Activated naive CD4-positive, alpha-beta T cell treated with anti-CD3 and anti-CD28 coated beads for 36 hours (primary cell): ENCODE measurements at regions of chr15 and their contacts with region 1.

Region 1: GRCh38 chr15:59997070-59997701 is 6.9 kb upstream of the FOXB1 start:
- DNase-seq: peak; percentile 69
- H3K4me3 Mint-ChIP-seq: peak overlapping the region; percentile 55
- H3K27ac Mint-ChIP-seq: no peak overlapping the region
- H3K4me1 Mint-ChIP-seq: peaks cover 40% of the 10 kb centered on the region
- H3K27me3 Mint-ChIP-seq: peaks cover 87% of the 10 kb centered on the region

Region 2: DNA sequence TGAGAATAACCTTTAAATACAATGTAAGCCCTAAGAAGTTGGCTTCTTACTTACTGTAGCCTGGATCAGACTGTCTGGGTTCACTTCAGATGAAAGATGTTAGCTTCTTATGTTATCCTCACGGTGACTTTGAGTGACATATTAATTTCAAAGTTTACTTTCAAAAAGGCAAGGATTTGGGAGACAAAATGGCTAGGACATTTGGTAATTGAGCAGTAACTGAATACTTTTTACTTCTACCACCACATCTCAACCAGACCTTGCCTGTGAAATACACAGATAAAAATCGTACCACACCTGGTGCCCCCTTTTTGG is 272.1 kb before region 1 on chr15:
- CTCF ChIA-PET with region 1: no interaction called
- intact Hi-C with region 1: loop called (anchors 5 kb)
- DNase-seq: no peak
- H3K4me3 Mint-ChIP-seq: no peak overlapping the region
- H3K27ac Mint-ChIP-seq: no peak overlapping the region
- H3K4me1 Mint-ChIP-seq: no peaks in the 10 kb centered on the region
- H3K27me3 Mint-ChIP-seq: no peaks in the 10 kb centered on the region

Region 3: DNA sequence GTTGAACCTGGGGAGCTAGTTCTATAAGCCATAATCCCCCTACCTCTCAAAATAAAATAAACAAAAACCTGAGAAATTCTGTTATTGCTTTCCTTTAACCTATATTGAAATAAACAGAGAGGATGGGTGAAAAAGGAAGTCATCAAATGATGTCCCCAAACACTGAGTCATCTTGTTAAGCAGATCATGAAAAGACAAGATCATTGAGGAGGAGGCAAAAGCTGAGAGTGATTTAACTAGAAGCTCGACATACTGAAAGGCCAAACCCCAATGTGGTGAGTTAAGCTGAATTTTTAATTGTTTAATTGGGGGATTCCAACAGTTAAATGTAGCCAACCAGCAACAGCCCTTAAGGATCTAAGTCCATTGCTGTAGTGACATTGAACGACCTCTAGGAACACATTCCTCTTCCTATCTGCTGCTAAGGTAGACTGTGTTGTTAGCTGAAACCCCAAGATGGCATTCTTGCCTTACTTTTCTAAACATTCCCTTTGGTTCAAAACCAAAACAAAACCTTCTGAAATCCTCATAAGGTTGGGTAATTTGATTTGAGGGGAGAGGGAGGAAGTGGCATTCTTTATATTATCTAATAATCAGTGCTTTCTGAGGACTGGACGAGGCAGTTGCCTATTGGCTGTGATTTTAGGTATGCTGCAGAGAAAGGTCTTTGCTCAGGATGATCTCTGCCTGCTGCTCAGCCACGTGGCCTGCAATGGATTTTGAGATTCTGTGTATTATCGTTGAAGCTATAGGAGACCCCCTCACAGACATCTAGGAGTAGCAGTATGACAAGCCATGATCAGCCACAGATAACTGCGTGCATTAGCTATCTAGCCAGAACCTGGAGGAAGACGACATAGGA is 245.4 kb before region 1 on chr15:
- CTCF ChIA-PET with region 1: interaction called, 3 read pairs
- intact Hi-C with region 1: loop called (anchors 10 kb)
- DNase-seq: no peak
- H3K4me3 Mint-ChIP-seq: no peak overlapping the region
- H3K27ac Mint-ChIP-seq: no peak overlapping the region
- H3K4me1 Mint-ChIP-seq: peaks cover 12% of the 10 kb centered on the region
- H3K27me3 Mint-ChIP-seq: no peaks in the 10 kb centered on the region

Region 4: DNA sequence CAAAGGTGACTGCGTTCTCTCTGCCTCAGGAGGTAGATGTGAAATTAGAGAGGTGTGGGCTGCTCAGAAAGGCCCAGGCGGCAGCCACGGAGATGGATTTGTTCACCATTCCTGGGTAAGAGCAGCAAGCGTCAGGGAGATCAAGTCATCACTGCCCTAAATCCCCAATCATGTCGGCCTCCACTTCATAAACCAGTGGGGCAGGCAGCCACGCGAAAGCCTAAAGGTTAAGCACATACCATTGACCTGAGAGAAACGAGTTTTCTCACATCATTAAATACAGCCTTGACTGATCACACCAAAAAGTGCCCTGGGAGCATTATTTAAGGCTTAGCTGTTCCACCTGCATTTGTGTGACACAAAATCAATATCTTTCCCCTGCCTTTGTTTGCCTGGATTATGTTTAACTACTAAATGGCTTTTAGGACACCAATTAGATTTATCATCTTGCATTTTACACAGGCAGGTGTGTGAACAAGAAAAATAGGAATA is 43.7 kb before region 1 on chr15:
- CTCF ChIA-PET with region 1: no interaction called
- intact Hi-C with region 1: no loop called
- DNase-seq: no peak
- H3K4me3 Mint-ChIP-seq: no peak overlapping the region
- H3K27ac Mint-ChIP-seq: no peak overlapping the region
- H3K4me1 Mint-ChIP-seq: no peaks in the 10 kb centered on the region
- H3K27me3 Mint-ChIP-seq: peaks cover 3% of the 10 kb centered on the region

Region 5: DNA sequence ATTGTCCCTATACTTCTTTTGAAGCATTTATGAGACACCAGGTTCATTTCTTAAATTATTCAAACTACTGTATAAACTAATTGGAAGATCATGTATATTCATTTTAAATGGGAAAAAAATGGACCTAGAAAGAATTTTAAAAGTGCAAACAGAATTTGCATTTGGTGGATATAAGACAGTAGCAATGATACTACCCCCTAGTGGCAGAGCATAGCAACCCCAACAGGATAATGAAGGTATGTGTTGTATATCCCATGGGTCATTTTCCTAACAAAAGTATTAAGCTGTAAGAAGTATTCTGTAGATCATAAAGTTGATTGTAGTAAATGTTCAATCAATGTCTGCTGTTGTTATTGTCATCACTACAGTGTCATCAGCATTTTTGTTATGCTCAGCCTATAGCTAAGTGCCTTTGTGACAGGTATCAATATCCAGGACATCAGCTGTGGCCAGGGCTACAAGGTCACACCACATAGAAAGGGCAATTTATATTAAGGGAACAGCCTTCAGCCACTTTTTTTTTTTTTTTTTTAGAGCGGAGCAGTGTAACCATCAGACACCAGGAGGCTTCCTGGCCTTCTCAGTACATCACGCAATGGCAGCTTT is 182.7 kb after region 1 on chr15:
- CTCF ChIA-PET with region 1: interaction called, 9 read pairs
- intact Hi-C with region 1: loop called (anchors 1 kb)
- DNase-seq: peak; percentile 49
- H3K4me3 Mint-ChIP-seq: no peak overlapping the region
- H3K27ac Mint-ChIP-seq: no peak overlapping the region
- H3K4me1 Mint-ChIP-seq: no peaks in the 10 kb centered on the region
- H3K27me3 Mint-ChIP-seq: peaks cover under 1% of the 10 kb centered on the region

Region 6: DNA sequence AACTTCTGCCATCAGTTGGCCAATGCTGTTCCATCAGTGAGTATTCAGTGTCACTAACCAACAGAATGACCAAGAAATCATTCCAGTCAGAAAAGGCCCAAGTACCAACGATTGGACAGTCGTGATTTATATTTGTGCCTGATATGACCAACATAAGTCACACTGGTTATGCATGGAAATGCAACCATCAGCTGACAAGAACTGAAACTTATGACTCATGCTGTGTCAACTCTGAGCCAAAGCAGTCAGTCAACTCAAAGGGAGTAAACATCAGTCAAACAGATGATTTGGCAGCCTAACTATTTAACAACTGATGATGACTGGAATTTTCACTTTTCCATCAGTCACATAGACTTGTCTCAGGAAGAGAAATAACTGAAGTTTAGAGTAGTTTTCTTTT is 258.2 kb after region 1 on chr15:
- CTCF ChIA-PET with region 1: no interaction called
- intact Hi-C with region 1: loop called (anchors 10 kb)
- DNase-seq: peak; percentile 59
- H3K4me3 Mint-ChIP-seq: no peak overlapping the region
- H3K27ac Mint-ChIP-seq: no peak overlapping the region
- H3K4me1 Mint-ChIP-seq: peaks cover 6% of the 10 kb centered on the region
- H3K27me3 Mint-ChIP-seq: peaks cover 26% of the 10 kb centered on the region

Region 7: DNA sequence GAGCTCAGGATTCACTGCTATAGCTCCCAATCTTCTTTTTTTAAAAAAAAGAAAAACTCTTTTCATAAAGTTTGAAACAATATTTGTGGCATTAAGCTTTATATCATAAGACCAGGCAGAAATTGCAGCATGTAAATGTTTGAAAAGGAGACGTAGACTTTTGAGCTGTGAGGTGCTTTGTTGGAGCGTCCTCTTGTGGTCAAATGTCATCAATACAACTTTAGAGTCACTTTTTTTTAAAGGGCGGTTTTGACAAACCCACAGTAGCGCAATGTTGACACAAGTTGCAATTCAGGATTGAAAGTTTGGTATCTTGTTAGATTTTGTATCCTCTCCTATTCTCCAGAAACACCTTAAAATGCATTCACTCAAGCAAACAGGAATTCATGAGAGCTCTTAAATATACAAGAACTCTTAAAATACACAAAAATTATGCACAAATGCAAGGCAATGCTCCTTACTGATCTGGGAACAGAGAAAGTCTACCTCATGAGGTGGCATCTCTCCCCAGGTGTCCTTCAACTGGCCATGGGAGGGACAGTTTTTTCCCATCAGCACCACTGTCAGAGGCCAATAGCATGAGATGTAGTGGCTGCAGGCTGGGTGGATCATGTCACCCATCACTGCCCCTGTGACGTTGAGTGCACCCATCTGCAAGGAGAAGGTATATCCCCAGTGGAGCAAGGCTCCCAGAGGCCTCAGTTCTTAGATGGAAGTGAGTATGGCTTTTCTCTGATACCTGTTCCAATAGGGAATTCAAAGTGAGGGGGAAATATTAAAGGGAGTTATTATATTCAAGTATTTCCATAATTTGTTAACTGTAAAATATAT is 329.9 kb after region 1 on chr15:
- CTCF ChIA-PET with region 1: interaction called, 3 read pairs
- intact Hi-C with region 1: loop called (anchors 2 kb)
- DNase-seq: peak; percentile 54
- H3K4me3 Mint-ChIP-seq: no peak overlapping the region
- H3K27ac Mint-ChIP-seq: no peak overlapping the region
- H3K4me1 Mint-ChIP-seq: peaks cover 2% of the 10 kb centered on the region
- H3K27me3 Mint-ChIP-seq: peaks cover 20% of the 10 kb centered on the region